Psoas muscle (tissue), 8 donors: ENCODE measurements at regions of chr13 and their contacts with region 1.

Region 1: DNA sequence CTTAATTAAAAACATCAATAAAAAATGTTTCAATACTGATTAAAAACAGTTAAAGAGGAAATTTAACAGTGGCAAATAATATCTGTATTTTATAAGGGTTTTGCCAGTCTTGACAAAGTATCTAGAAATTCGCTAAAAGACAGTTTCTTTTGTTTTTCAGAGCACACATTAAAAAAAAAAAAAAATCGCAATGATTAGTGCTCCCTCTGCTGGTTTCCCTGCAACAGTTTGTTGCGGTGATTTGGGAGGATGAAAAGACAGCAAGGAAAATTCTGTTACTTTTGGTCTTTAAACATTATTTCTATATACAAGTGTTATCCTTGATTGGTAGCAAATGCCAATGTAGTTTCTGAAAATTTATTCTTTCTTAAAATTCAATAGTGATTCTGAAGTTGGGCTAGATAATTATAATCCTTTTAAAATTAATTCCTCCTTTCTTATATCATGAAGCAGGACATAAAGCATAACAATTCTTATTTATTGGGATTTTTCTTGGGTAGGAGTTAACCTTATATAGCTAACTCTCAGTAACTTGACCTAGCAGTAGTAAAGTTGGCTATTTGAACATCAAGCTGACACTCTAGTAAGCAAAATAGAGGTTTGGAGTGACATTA is 23.1 kb upstream of the SPRY2 start:
- DNase-seq: no peak
- ATAC-seq: peak in 1 of 4 donors; percentile 74
- H3K4me3 ChIP-seq: peak overlapping the region; percentile 46
- H3K27ac ChIP-seq: no peak overlapping the region
- H3K4me1 ChIP-seq: peaks cover 4% of the 10 kb centered on the region
- H3K27me3 ChIP-seq: no peaks in the 10 kb centered on the region
- CTCF ChIP-seq: peak; percentile 85

Region 2: GRCh38 chr13:79775830-79776229 is 588.2 kb before region 1 on chr13:
- intact Hi-C with region 1: loop called (anchors 5 kb)
- DNase-seq: no peak
- ATAC-seq: peak in 1 of 4 donors; percentile 65
- H3K4me3 ChIP-seq: no peak overlapping the region
- H3K27ac ChIP-seq: no peak overlapping the region
- H3K4me1 ChIP-seq: no peaks in the 10 kb centered on the region
- H3K27me3 ChIP-seq: no peaks in the 10 kb centered on the region
- CTCF ChIP-seq: peak; percentile 55